Sigmoid colon (tissue), 7 donors: ENCODE measurements at regions of chr7 and their contacts with region 1.

Region 1: GRCh38 chr7:119270045-119270464 is 1002.9 kb upstream of the KCND2 start:
- DNase-seq: peak; percentile 57
- H3K4me3 ChIP-seq: no peak overlapping the region
- H3K27ac ChIP-seq: no peak overlapping the region
- H3K4me1 ChIP-seq: no peaks in the 10 kb centered on the region
- H3K27me3 ChIP-seq: no peaks in the 10 kb centered on the region
- CTCF ChIP-seq: peak in 3 of 4 experiments; percentile 13 to 63 (median 30)
- EP300 ChIP-seq: no peak
- POLR2A ChIP-seq: no peak

Region 2: DNA sequence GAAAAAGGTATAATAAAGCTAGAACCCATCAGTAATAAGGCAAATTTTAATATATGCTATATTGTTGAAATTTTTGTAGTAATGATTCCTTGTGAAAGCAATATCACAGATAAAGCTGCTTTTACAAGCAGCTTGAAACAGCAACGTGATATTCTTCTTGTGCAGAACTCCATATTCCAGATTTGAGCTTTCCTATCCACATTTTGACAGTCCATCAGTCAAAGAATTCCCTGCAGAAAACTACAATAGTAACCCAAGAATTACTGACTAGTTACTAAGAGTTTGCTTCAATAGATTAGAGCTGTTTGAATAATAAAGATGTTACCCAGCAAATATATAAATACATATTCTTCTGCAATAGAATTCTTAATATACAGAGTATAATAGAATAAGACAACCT is 1294.1 kb after region 1 on chr7:
- intact Hi-C with region 1: loop called (anchors 10 kb)
- DNase-seq: no peak
- H3K4me3 ChIP-seq: no peak overlapping the region
- H3K27ac ChIP-seq: no peak overlapping the region
- H3K4me1 ChIP-seq: no peaks in the 10 kb centered on the region
- H3K27me3 ChIP-seq: no peaks in the 10 kb centered on the region
- CTCF ChIP-seq: no peak
- EP300 ChIP-seq: no peak
- POLR2A ChIP-seq: no peak